CD8-positive, alpha-beta T cell (primary cell): ENCODE measurements at regions of chrX and their contacts with region 1.

Region 1: GRCh38 chrX:130024127-130024526 is 41.7 kb downstream of the BCORL1 start:
- DNase-seq: peak; percentile 64 to 92 (median 80)
- ATAC-seq: peak; percentile 100
- H3K4me3 ChIP-seq: no peak overlapping the region
- H3K4me3 Mint-ChIP-seq: peak overlapping the region; percentile 57
- H3K27ac ChIP-seq: peak overlapping the region in 1 of 2 experiments; percentile 56
- H3K27ac Mint-ChIP-seq: peak overlapping the region; percentile 75
- H3K4me1 ChIP-seq: peaks cover 7% of the 10 kb centered on the region
- H3K4me1 Mint-ChIP-seq: peaks cover 13% of the 10 kb centered on the region
- H3K27me3 ChIP-seq: no peaks in the 10 kb centered on the region
- H3K27me3 Mint-ChIP-seq: no peaks in the 10 kb centered on the region
- CTCF ChIP-seq: no peak

Region 2: DNA sequence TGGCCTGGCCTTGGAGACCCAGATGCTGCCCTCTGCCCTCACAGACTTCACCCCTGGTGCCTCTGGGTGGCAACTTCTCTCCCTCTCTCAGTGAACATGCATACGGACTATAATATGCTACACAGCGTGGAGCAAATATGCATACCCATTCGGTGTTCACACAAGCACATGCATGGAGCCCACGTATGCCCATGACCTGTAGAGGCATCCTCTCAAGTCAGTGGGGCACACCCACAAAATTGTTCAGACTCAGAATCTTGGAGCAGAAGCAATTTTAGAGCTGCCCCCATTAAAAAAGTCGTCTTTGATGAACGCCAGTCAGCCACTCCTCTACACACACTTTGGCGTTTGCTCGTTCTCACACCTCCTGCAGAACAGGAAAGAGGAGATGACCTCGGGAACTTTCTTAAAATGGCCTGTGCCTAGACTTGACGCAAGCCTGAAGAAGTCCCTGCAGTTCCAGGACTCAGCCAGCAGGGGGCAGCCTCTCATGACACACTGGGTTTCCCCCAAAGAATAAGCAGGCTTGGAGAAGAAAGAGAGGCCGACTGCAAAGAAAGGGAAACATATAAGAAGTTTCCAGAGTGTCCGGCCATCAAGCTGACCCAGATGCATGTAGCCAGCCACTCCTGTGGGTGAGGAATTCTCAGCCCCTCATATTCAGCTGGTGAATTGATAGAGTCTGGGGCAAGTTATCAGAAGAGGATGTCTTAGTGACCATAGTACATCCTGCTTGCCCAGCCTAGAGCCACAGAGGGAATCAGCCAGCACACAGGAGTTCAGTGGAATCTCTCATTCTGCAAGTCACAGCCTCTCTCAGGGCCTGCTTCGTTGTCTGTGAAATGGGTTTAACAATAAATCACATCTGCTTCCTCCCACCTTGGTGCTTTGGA is 386.7 kb before region 1 on chrX:
- CTCF ChIA-PET with region 1: interaction called, 5 read pairs
- POLR2A ChIA-PET with region 1: no interaction called
- intact Hi-C with region 1: loop called in 1 of 2 experiments (anchors 1 kb)
- DNase-seq: peak; percentile 54 to 87 (median 75)
- ATAC-seq: peak; percentile 74
- H3K4me3 ChIP-seq: no peak overlapping the region
- H3K4me3 Mint-ChIP-seq: no peak overlapping the region
- H3K27ac ChIP-seq: no peak overlapping the region
- H3K27ac Mint-ChIP-seq: no peak overlapping the region
- H3K4me1 ChIP-seq: no peaks in the 10 kb centered on the region
- H3K4me1 Mint-ChIP-seq: no peaks in the 10 kb centered on the region
- H3K27me3 ChIP-seq: no peaks in the 10 kb centered on the region
- H3K27me3 Mint-ChIP-seq: no peaks in the 10 kb centered on the region
- CTCF ChIP-seq: peak; percentile 67

Region 3: DNA sequence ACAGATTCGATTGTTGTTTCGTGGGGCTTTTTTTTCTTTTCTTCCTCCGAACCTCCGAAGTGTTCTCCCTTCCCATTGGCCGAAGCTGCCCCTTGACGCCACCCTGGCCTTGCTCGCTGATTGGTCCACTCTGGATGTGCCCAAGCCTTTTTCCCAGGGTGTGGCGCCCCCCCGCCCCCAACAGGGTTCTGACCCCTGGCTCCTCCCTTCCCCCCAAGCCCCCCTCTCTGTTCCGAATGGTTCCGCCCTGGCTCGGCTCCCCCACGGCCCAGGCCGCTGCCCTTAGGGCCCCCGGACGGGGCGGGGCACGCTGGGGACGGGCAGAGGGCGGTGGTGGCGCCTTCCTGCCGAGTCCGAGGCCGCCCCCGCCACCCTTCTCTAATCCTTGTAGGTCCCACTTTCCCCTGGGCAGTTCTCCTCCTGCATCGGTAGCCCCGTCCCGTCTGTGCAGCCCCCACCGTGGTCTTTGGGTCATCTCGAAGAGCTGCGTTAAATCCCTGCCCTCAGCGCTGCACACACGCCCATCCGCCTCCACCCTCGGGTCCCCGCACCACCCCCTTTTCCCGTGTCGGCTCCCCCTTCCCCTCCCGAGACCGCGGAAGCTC is 92.6 kb before region 1 on chrX:
- CTCF ChIA-PET with region 1: interaction called, 220 read pairs
- POLR2A ChIA-PET with region 1: no interaction called
- intact Hi-C with region 1: loop called in 1 of 2 experiments (anchors 1 kb)
- DNase-seq: peak; percentile 26 to 82 (median 55)
- ATAC-seq: peak; percentile 50
- H3K4me3 ChIP-seq: peak overlapping the region; percentile 58 to 70
- H3K4me3 Mint-ChIP-seq: peak overlapping the region; percentile 75
- H3K27ac ChIP-seq: peak overlapping the region in 1 of 2 experiments; percentile 77
- H3K27ac Mint-ChIP-seq: peak overlapping the region; percentile 88
- H3K4me1 ChIP-seq: no peaks in the 10 kb centered on the region
- H3K4me1 Mint-ChIP-seq: peaks cover 8% of the 10 kb centered on the region
- H3K27me3 ChIP-seq: no peaks in the 10 kb centered on the region
- H3K27me3 Mint-ChIP-seq: no peaks in the 10 kb centered on the region
- CTCF ChIP-seq: no peak

Region 4: GRCh38 chrX:129957241-129958082 is 66.7 kb before region 1 on chrX:
- CTCF ChIA-PET with region 1: interaction called, 3 read pairs
- POLR2A ChIA-PET with region 1: interaction called, 3 read pairs
- intact Hi-C with region 1: loop called in 1 of 2 experiments (anchors 10 kb)
- DNase-seq: peak in 3 of 9 experiments; percentile 3 to 59 (median 52)
- ATAC-seq: peak; percentile 12
- H3K4me3 ChIP-seq: peak overlapping the region; percentile 43 to 49
- H3K4me3 Mint-ChIP-seq: peak overlapping the region; percentile 69
- H3K27ac ChIP-seq: peak overlapping the region; percentile 23 to 49
- H3K27ac Mint-ChIP-seq: peak overlapping the region; percentile 55
- H3K4me1 ChIP-seq: peaks cover 22% of the 10 kb centered on the region
- H3K4me1 Mint-ChIP-seq: peaks cover 37% of the 10 kb centered on the region
- H3K27me3 ChIP-seq: no peaks in the 10 kb centered on the region
- H3K27me3 Mint-ChIP-seq: no peaks in the 10 kb centered on the region
- CTCF ChIP-seq: no peak

Region 5: DNA sequence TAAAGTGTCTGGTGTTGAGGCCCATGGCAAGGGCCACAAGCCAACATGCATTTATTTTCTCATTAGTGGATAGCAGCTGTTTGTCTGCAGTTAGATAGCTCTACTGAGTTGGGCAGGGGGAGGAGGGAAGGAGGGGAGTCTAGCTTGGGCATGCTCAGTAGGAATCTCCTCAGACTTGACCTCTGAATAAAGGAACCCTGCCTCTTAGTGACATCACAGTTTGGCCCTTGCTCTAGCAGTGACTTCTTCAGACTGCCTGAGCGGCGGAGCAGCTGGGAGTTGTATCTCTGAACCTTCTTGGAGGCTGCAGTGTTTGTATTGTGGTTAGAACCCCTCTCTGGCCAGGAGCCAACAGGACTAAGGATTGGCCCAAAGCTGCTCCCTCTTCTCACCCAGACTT is 15.7 kb after region 1 on chrX:
- CTCF ChIA-PET with region 1: interaction called, 11 read pairs
- POLR2A ChIA-PET with region 1: no interaction called
- intact Hi-C with region 1: no loop called
- DNase-seq: no peak
- ATAC-seq: no peak
- H3K4me3 ChIP-seq: no peak overlapping the region
- H3K4me3 Mint-ChIP-seq: no peak overlapping the region
- H3K27ac ChIP-seq: no peak overlapping the region
- H3K27ac Mint-ChIP-seq: no peak overlapping the region
- H3K4me1 ChIP-seq: no peaks in the 10 kb centered on the region
- H3K4me1 Mint-ChIP-seq: no peaks in the 10 kb centered on the region
- H3K27me3 ChIP-seq: no peaks in the 10 kb centered on the region
- H3K27me3 Mint-ChIP-seq: no peaks in the 10 kb centered on the region
- CTCF ChIP-seq: no peak